ENCODE measurements at regions of chr11 and their contacts with region 1.

Region 1: GRCh38 chr11:117098269-117099232 is at the start of gene SIK3:
- DNase-seq: peak; percentile 94 to 96 (median 94)
- H3K4me3 ChIP-seq: peak within 1 kb of the TSS; percentile 87
- H3K4me3 Mint-ChIP-seq: peak within 1 kb of the TSS; percentile 90 to 99 (median 97)
- H3K27ac ChIP-seq: peak within 1 kb of the TSS; percentile 99
- H3K27ac Mint-ChIP-seq: peak within 1 kb of the TSS; percentile 99 to 100 (median 100)
- H3K4me1 ChIP-seq: peaks cover 44% of the 10 kb centered on the region
- H3K4me1 Mint-ChIP-seq: peaks cover 58 to 61% (median 59%) of the 10 kb centered on the region in 3 donors
- H3K27me3 ChIP-seq: no peaks in the 10 kb centered on the region
- H3K27me3 Mint-ChIP-seq: peaks cover 0 to 2% of the 10 kb centered on the region in 2 donors
- total RNA-seq, gene SIK3: 42.8 to 48.7 TPM

Region 2: GRCh38 chr11:116879800-116880625 is 218.5 kb before region 1 on chr11:
- CTCF ChIA-PET with region 1: interaction called, 12 read pairs
- POLR2A ChIA-PET with region 1: no interaction called
- DNase-seq: peak in 2 of 5 donors; percentile 29 to 47
- H3K4me3 ChIP-seq: no peak overlapping the region
- H3K4me3 Mint-ChIP-seq: no peak overlapping the region
- H3K27ac ChIP-seq: no peak overlapping the region
- H3K27ac Mint-ChIP-seq: peak overlapping the region in 6 of 8 donors; percentile 31 to 82 (median 71)
- H3K4me1 ChIP-seq: no peaks in the 10 kb centered on the region
- H3K4me1 Mint-ChIP-seq: peaks cover 9 to 20% (median 13%) of the 10 kb centered on the region in 3 donors
- H3K27me3 ChIP-seq: no peaks in the 10 kb centered on the region
- H3K27me3 Mint-ChIP-seq: peaks cover 0 to 1% of the 10 kb centered on the region in 2 donors

Measured in CD8-positive, alpha-beta memory T cell (primary cell).